B cell (primary cell): ENCODE measurements at regions of chr15 and their contacts with region 1.

Region 1: DNA sequence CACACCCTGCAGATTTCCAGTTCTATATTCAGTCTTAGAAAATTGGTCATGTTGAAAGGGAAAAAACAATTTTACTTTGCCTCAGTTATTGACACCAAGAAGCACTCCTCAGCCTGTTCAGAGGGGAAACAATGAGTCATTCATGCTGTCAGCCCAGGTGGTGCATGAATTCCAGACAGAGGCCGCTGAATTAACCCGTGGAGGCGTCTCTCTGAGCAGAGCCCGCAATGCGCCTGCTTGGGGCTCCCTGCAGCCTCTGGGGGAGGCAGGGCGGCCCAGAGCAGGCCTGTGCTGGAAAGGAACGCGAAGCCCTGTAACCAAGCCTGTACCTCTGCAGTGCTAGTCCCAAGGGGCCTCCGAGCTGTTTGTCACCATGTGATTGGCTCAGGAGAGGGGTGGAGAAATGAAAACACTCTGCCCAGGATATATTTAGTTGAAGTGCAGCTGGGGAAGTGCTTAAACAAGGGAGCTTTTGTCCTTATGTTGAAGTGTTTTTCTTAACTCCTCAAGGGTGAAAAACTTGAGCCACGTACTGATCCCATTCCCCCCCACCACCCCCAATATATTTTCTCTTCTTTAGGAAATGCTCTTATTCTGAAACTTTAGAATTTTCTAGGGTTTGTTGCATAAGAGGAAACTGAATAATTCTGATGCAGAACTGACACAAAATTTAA is 68.3 kb upstream of the CHD2 start:
- DNase-seq: peak; percentile 95
- ATAC-seq: peak; percentile 93
- H3K4me3 ChIP-seq: peak overlapping the region; percentile 23 to 65 (median 45)
- H3K4me3 Mint-ChIP-seq: peak overlapping the region; percentile 85
- H3K27ac ChIP-seq: peak overlapping the region; percentile 85 to 95
- H3K27ac Mint-ChIP-seq: peak overlapping the region; percentile 97
- H3K4me1 ChIP-seq: peaks cover 57 to 62% of the 10 kb centered on the region in 2 donors
- H3K4me1 Mint-ChIP-seq: peaks cover 50% of the 10 kb centered on the region
- H3K27me3 ChIP-seq: no peaks in the 10 kb centered on the region
- H3K27me3 Mint-ChIP-seq: no peaks in the 10 kb centered on the region
- CTCF ChIP-seq: no peak

Region 2: GRCh38 chr15:92521624-92522008 is 310.2 kb before region 1 on chr15:
- CTCF ChIA-PET with region 1: no interaction called
- POLR2A ChIA-PET with region 1: no interaction called
- intact Hi-C with region 1: no loop called
- DNase-seq: peak; percentile 18
- ATAC-seq: no peak
- H3K4me3 ChIP-seq: no peak overlapping the region
- H3K4me3 Mint-ChIP-seq: no peak overlapping the region
- H3K27ac ChIP-seq: no peak overlapping the region
- H3K27ac Mint-ChIP-seq: no peak overlapping the region
- H3K4me1 ChIP-seq: no peaks in the 10 kb centered on the region
- H3K4me1 Mint-ChIP-seq: no peaks in the 10 kb centered on the region
- H3K27me3 ChIP-seq: no peaks in the 10 kb centered on the region
- H3K27me3 Mint-ChIP-seq: no peaks in the 10 kb centered on the region
- CTCF ChIP-seq: peak; percentile 36

Region 3: GRCh38 chr15:92665100-92665555 is 166.7 kb before region 1 on chr15:
- CTCF ChIA-PET with region 1: no interaction called
- POLR2A ChIA-PET with region 1: no interaction called
- intact Hi-C with region 1: no loop called
- DNase-seq: no peak
- ATAC-seq: no peak
- H3K4me3 ChIP-seq: no peak overlapping the region
- H3K4me3 Mint-ChIP-seq: no peak overlapping the region
- H3K27ac ChIP-seq: no peak overlapping the region
- H3K27ac Mint-ChIP-seq: no peak overlapping the region
- H3K4me1 ChIP-seq: no peaks in the 10 kb centered on the region
- H3K4me1 Mint-ChIP-seq: no peaks in the 10 kb centered on the region
- H3K27me3 ChIP-seq: peaks cover 0 to 6% (median 0%) of the 10 kb centered on the region in 4 experiments
- H3K27me3 Mint-ChIP-seq: peaks cover 29% of the 10 kb centered on the region
- CTCF ChIP-seq: no peak

Region 4: GRCh38 chr15:92788196-92788595 is 43.6 kb before region 1 on chr15:
- CTCF ChIA-PET with region 1: no interaction called
- POLR2A ChIA-PET with region 1: no interaction called
- intact Hi-C with region 1: no loop called
- DNase-seq: no peak
- ATAC-seq: no peak
- H3K4me3 ChIP-seq: no peak overlapping the region
- H3K4me3 Mint-ChIP-seq: no peak overlapping the region
- H3K27ac ChIP-seq: no peak overlapping the region
- H3K27ac Mint-ChIP-seq: no peak overlapping the region
- H3K4me1 ChIP-seq: no peaks in the 10 kb centered on the region
- H3K4me1 Mint-ChIP-seq: no peaks in the 10 kb centered on the region
- H3K27me3 ChIP-seq: no peaks in the 10 kb centered on the region
- H3K27me3 Mint-ChIP-seq: no peaks in the 10 kb centered on the region
- CTCF ChIP-seq: no peak

Region 5: DNA sequence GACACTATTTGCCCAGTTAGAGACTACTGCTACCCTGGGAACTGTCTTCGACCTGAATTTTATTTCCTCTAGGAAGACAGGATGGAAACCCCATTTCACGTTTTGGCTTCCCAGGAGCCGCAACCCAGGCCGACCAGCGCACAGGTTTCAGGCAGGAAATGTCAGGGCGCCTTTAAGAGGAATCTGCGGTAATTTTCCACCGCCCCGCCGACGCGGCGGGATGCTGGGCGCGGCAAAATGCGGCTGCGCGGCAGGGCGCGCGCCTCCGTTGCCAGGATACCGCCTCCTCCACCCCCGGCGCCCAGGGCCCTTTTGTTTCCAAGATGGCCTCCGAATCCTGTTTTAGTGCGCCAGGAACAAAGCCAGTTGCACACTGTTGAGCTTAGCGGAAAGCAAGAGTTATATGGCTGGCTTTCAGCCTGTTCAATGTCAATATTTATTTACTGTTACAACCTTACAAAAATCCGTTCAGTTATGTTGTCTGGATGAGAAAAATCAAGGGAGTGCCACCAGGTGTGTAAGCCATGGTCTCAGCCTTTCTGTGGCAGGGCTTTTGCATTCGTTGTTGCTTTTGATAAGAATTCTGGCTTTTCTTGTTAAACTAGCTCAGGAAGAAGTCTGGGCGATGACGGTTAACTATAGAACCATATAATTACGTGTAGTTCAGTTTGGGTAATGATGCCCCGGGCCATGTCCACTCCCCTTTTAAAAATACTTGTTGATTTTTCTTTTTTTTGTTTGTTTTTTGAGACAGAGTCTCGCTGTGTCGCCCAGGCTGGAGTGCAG is 11.4 kb before region 1 on chr15:
- CTCF ChIA-PET with region 1: interaction called, 16 read pairs
- POLR2A ChIA-PET with region 1: interaction called, 16 read pairs
- intact Hi-C with region 1: loop called (anchors 1 kb)
- DNase-seq: peak; percentile 90
- ATAC-seq: peak; percentile 80
- H3K4me3 ChIP-seq: peak overlapping the region; percentile 58 to 92 (median 75)
- H3K4me3 Mint-ChIP-seq: peak overlapping the region; percentile 90
- H3K27ac ChIP-seq: peak overlapping the region; percentile 82 to 83
- H3K27ac Mint-ChIP-seq: peak overlapping the region; percentile 95
- H3K4me1 ChIP-seq: peaks cover 25 to 49% of the 10 kb centered on the region in 2 donors
- H3K4me1 Mint-ChIP-seq: peaks cover 60% of the 10 kb centered on the region
- H3K27me3 ChIP-seq: no peaks in the 10 kb centered on the region
- H3K27me3 Mint-ChIP-seq: no peaks in the 10 kb centered on the region
- CTCF ChIP-seq: no peak

Region 6: GRCh38 chr15:92845126-92845508 is 13.3 kb after region 1 on chr15:
- CTCF ChIA-PET with region 1: interaction called, 10 read pairs
- POLR2A ChIA-PET with region 1: interaction called, 84 read pairs
- intact Hi-C with region 1: loop called (anchors 1 kb)
- DNase-seq: peak; percentile 83
- ATAC-seq: peak; percentile 52
- H3K4me3 ChIP-seq: peak overlapping the region in 4 of 5 experiments; percentile 32 to 51 (median 38)
- H3K4me3 Mint-ChIP-seq: peak overlapping the region; percentile 83
- H3K27ac ChIP-seq: peak overlapping the region; percentile 74 to 79
- H3K27ac Mint-ChIP-seq: peak overlapping the region; percentile 96
- H3K4me1 ChIP-seq: peaks cover 61 to 70% of the 10 kb centered on the region in 2 donors
- H3K4me1 Mint-ChIP-seq: peaks cover 67% of the 10 kb centered on the region
- H3K27me3 ChIP-seq: no peaks in the 10 kb centered on the region
- H3K27me3 Mint-ChIP-seq: no peaks in the 10 kb centered on the region
- CTCF ChIP-seq: no peak

Region 7: DNA sequence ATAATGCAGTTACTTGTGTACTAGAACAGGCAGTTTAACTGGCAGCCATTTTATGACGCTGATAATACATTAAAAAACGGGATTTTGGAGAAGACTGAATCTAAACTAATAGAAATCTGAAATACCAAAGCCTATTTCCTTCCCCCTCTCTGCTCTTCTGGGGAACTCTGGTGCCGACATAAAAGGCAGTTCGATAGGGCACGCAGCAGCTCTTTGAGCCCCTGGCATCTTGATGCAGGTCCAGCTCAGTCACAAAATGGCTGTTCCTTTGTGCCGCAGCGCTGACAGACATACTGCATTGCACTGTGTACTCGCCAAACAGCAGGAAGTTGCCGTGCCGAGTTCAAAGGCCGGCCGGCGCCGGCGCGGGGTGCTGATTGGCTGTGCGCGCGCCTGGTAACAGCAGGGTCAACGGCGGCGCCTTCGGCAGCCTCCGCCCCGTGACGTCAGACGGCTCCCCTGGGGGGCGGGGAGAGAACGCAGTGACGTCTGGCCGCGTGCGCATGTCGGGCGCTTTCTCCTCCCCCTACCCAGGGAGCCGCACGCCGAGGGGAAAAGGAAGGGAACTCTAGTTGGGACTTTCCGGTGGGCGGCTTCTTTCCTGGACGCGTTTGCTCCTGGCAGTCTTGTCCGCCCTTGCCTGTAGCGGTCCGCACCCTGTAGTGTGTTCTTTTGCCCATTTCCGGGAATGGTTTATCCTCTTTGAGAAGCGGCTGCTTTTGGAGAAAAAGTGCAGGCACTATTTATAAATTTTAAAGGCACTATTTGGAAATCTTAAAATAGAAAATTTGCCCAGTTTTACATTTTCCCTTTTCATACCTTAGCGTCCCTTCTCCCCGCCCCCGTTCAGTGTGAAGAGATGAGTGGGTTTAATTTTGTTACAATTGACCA is 72.4 kb after region 1 on chr15:
- CTCF ChIA-PET with region 1: interaction called, 11 read pairs
- POLR2A ChIA-PET with region 1: interaction called, 25 read pairs
- intact Hi-C with region 1: loop called (anchors 1 kb)
- DNase-seq: peak; percentile 99
- ATAC-seq: peak; percentile 82
- H3K4me3 ChIP-seq: peak overlapping the region; percentile 64 to 100 (median 85)
- H3K4me3 Mint-ChIP-seq: peak overlapping the region; percentile 92
- H3K27ac ChIP-seq: peak overlapping the region; percentile 95 to 97
- H3K27ac Mint-ChIP-seq: peak overlapping the region; percentile 100
- H3K4me1 ChIP-seq: peaks cover 48 to 57% of the 10 kb centered on the region in 2 donors
- H3K4me1 Mint-ChIP-seq: peaks cover 64% of the 10 kb centered on the region
- H3K27me3 ChIP-seq: no peaks in the 10 kb centered on the region
- H3K27me3 Mint-ChIP-seq: no peaks in the 10 kb centered on the region
- CTCF ChIP-seq: no peak

Region 8: GRCh38 chr15:92917606-92918407 is 86.0 kb after region 1 on chr15:
- CTCF ChIA-PET with region 1: interaction called, 27 read pairs
- POLR2A ChIA-PET with region 1: interaction called, 16 read pairs
- intact Hi-C with region 1: loop called (anchors 1 kb)
- DNase-seq: peak; percentile 94
- ATAC-seq: peak; percentile 44
- H3K4me3 ChIP-seq: peak overlapping the region in 1 of 5 experiments; percentile 8
- H3K4me3 Mint-ChIP-seq: peak overlapping the region; percentile 74
- H3K27ac ChIP-seq: peak overlapping the region; percentile 83 to 93
- H3K27ac Mint-ChIP-seq: peak overlapping the region; percentile 93
- H3K4me1 ChIP-seq: peaks cover 73 to 77% of the 10 kb centered on the region in 2 donors
- H3K4me1 Mint-ChIP-seq: peaks cover 80% of the 10 kb centered on the region
- H3K27me3 ChIP-seq: no peaks in the 10 kb centered on the region
- H3K27me3 Mint-ChIP-seq: no peaks in the 10 kb centered on the region
- CTCF ChIP-seq: peak; percentile 95